ENCODE measurements at regions of chrX and their contacts with region 1.

Region 1: DNA sequence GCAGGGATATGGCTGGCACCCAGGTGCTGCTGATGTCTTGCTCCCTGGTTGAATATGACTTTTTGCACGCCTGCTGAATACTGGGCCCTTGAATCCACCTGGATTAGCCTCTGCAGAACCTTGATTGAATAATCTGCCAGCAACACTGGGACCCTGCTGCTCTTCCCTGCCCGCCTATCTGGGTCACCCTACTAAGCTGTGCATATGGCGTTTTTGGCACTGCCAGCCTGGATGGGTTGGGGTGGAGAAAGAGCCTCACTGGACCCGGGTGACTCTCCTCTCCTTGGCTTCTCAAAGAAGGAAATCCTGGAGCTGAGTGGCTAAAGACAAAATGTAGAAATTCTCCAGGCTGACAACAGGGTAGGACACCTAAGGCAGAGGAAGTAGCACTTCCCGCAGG is 100.0 kb downstream of the MAOA start:
- DNase-seq: no peak
- H3K4me3 ChIP-seq: no peak overlapping the region
- CTCF ChIP-seq: no peak
- POLR2A ChIP-seq: no peak

Region 2: GRCh38 chrX:42694260-42694810 is 1061.7 kb before region 1 on chrX:
- intact Hi-C with region 1: loop called (anchors 5 kb)
- DNase-seq: no peak
- H3K4me3 ChIP-seq: no peak overlapping the region
- CTCF ChIP-seq: no peak
- POLR2A ChIP-seq: no peak